CD14-positive monocyte (primary cell): ENCODE measurements at regions of chr12 and their contacts with region 1.

Region 1: GRCh38 chr12:54379401-54380201 is 4.9 kb downstream of the ZNF385A start:
- DNase-seq: peak; percentile 82 to 88 (median 86)
- H3K4me3 ChIP-seq: peak overlapping the region in 1 of 3 experiments; percentile 64
- H3K4me3 Mint-ChIP-seq: peak overlapping the region; percentile 75 to 80
- H3K27ac ChIP-seq: peak overlapping the region in 1 of 2 donors; percentile 68
- H3K27ac Mint-ChIP-seq: peak overlapping the region; percentile 81 to 100 (median 90)
- H3K4me1 ChIP-seq: peaks cover 53 to 65% of the 10 kb centered on the region in 2 donors
- H3K4me1 Mint-ChIP-seq: peaks cover 77% of the 10 kb centered on the region
- H3K27me3 ChIP-seq: no peaks in the 10 kb centered on the region
- H3K27me3 Mint-ChIP-seq: peaks cover 0 to 2% (median 0%) of the 10 kb centered on the region in 3 donors
- CTCF ChIP-seq: peak; percentile 100

Region 2: DNA sequence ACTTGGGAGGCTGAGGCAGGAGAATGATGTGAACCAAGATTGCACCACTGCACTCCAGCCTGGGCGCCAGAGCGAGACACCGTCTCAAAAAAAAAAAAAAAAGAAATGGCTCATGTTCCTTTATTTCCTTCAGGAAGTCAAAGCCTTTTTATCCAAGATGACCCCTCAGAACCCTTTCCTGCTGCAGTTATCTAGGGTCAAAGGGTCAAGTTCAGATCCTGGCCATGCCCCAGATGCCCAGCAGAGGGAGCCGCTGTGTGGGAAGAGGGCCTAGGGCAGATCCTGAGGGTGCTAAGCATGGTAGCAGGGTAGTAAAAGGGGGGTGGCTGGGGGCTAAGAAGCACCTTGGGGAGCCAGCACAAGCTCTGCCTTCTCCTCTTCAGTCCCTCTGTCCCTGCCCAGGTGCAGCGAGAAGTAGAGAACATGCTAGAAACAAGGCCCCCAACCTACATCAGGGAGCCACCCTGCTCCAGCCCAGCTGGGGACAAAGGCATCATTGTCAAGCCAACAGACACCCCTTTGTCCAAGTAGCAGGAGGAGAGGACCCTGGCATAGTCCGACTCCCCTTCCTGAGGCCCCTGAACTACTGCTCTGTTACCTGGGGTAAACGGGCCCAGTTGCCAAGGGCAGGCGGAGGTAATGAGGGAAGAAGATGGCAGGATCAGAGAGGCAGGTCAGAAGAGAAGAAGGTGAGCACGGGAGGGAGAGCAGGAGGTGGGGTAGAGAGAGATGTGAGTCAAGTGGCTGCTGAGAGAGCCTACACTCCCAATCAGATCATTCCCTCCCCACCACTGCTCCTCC is 85.2 kb before region 1 on chr12:
- intact Hi-C with region 1: loop called in 1 of 2 experiments (anchors 5 kb)
- DNase-seq: peak; percentile 63 to 75 (median 73)
- H3K4me3 ChIP-seq: peak overlapping the region in 1 of 3 experiments; percentile 99
- H3K4me3 Mint-ChIP-seq: peak overlapping the region; percentile 74 to 99
- H3K27ac ChIP-seq: peak overlapping the region; percentile 51 to 87
- H3K27ac Mint-ChIP-seq: peak overlapping the region; percentile 85 to 92 (median 88)
- H3K4me1 ChIP-seq: peaks cover 95 to 100% of the 10 kb centered on the region in 2 donors
- H3K4me1 Mint-ChIP-seq: peaks cover 89% of the 10 kb centered on the region
- H3K27me3 ChIP-seq: no peaks in the 10 kb centered on the region
- H3K27me3 Mint-ChIP-seq: no peaks in the 10 kb centered on the region
- CTCF ChIP-seq: peak; percentile 94

Region 3: GRCh38 chr12:54352022-54352531 is 27.5 kb before region 1 on chr12:
- intact Hi-C with region 1: no loop called
- DNase-seq: no peak
- H3K4me3 ChIP-seq: no peak overlapping the region
- H3K4me3 Mint-ChIP-seq: no peak overlapping the region
- H3K27ac ChIP-seq: no peak overlapping the region
- H3K27ac Mint-ChIP-seq: peak overlapping the region in 5 of 7 donors; percentile 20 to 64 (median 60)
- H3K4me1 ChIP-seq: peaks cover 5 to 10% of the 10 kb centered on the region in 2 donors
- H3K4me1 Mint-ChIP-seq: peaks cover 21% of the 10 kb centered on the region
- H3K27me3 ChIP-seq: no peaks in the 10 kb centered on the region
- H3K27me3 Mint-ChIP-seq: peaks cover 7 to 11% (median 8%) of the 10 kb centered on the region in 3 donors
- CTCF ChIP-seq: no peak

Region 4: DNA sequence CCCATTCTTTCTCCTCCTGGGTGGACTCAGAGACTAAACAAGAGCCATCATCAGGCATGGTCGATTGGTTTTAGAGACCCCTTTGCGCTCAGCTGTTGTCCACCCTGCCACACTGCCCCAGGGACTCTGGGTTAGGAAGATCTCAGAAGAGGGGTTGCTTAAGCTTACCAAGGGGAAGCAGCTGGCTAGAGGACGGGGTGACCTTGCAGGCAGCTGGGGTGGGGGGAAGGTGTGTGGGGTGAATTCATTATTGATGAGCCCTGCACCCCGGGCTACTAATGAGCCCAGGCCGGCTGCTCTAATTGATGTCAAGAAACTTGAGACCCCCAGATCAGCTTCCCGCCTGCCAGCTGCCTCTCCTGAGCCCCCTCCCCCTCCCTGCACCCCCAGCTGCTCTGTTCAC is 13.6 kb after region 1 on chr12:
- intact Hi-C with region 1: loop called in 1 of 2 experiments (anchors 1 kb)
- DNase-seq: peak in 1 of 3 donors; percentile 46
- H3K4me3 ChIP-seq: peak overlapping the region in 1 of 3 experiments; percentile 56
- H3K4me3 Mint-ChIP-seq: peak overlapping the region; percentile 12 to 72
- H3K27ac ChIP-seq: peak overlapping the region; percentile 92 to 93
- H3K27ac Mint-ChIP-seq: peak overlapping the region; percentile 95 to 98 (median 97)
- H3K4me1 ChIP-seq: peaks cover 68 to 76% of the 10 kb centered on the region in 2 donors
- H3K4me1 Mint-ChIP-seq: peaks cover 63% of the 10 kb centered on the region
- H3K27me3 ChIP-seq: no peaks in the 10 kb centered on the region
- H3K27me3 Mint-ChIP-seq: peaks cover 0 to 2% (median 0%) of the 10 kb centered on the region in 3 donors
- CTCF ChIP-seq: no peak